Activated B cell treated with CpG ODN at 0.5 μM for 24 hours (primary cell): ENCODE measurements at regions of chr1 and their contacts with region 1.

Region 1: GRCh38 chr1:39268112-39268581 is 63.7 kb downstream of the MACF1 start:
- DNase-seq: no peak
- ATAC-seq: no peak
- H3K4me3 Mint-ChIP-seq: peak overlapping the region; percentile 82
- H3K27ac Mint-ChIP-seq: peak overlapping the region; percentile 84
- H3K4me1 Mint-ChIP-seq: peaks cover 65% of the 10 kb centered on the region
- H3K27me3 Mint-ChIP-seq: no peaks in the 10 kb centered on the region
- CTCF ChIP-seq: no peak

Region 2: GRCh38 chr1:38873027-38873969 is 394.8 kb before region 1 on chr1 and contains the start of gene MYCBP:
- CTCF ChIA-PET with region 1: no interaction called
- POLR2A ChIA-PET with region 1: no interaction called
- intact Hi-C with region 1: loop called (anchors 10 kb)
- DNase-seq: peak; percentile 97
- ATAC-seq: peak; percentile 99
- H3K4me3 Mint-ChIP-seq: peak within 1 kb of the TSS; percentile 92
- H3K27ac Mint-ChIP-seq: peak within 1 kb of the TSS; percentile 83
- H3K4me1 Mint-ChIP-seq: peaks cover 23% of the 10 kb centered on the region
- H3K27me3 Mint-ChIP-seq: no peaks in the 10 kb centered on the region
- CTCF ChIP-seq: no peak
- total RNA-seq, gene MYCBP: 18.6 and 19.2 TPM in 2 replicates

Region 3: DNA sequence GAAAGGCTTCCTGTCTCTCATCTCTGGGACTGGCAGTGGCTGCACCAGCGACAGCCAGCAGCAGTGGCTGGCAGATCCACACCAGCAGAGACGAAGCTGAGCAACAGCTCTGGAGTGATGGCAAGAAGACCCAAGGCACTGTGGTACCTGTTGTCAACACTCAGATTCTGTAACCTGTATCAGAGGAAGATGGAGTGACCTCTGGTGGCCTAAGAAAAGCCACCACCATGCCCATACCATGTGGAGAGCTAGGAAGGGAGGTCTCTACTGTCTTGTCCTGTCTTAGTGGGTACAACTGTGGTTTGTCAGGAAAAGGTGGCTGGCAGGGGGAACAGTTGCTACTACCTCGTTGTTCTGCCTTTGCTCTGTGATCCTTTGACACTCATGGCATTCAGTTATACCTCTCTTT is 304.0 kb before region 1 on chr1:
- CTCF ChIA-PET with region 1: no interaction called
- POLR2A ChIA-PET with region 1: no interaction called
- intact Hi-C with region 1: no loop called
- DNase-seq: no peak
- ATAC-seq: no peak
- H3K4me3 Mint-ChIP-seq: no peak overlapping the region
- H3K27ac Mint-ChIP-seq: no peak overlapping the region
- H3K4me1 Mint-ChIP-seq: no peaks in the 10 kb centered on the region
- H3K27me3 Mint-ChIP-seq: peaks cover 2% of the 10 kb centered on the region
- CTCF ChIP-seq: no peak

Region 4: GRCh38 chr1:39105061-39105840 is 162.9 kb before region 1 on chr1:
- CTCF ChIA-PET with region 1: interaction called, 109 read pairs
- POLR2A ChIA-PET with region 1: interaction called, 13 read pairs
- intact Hi-C with region 1: loop called (anchors 1 kb)
- DNase-seq: peak; percentile 62
- ATAC-seq: peak; percentile 8
- H3K4me3 Mint-ChIP-seq: no peak overlapping the region
- H3K27ac Mint-ChIP-seq: no peak overlapping the region
- H3K4me1 Mint-ChIP-seq: peaks cover 33% of the 10 kb centered on the region
- H3K27me3 Mint-ChIP-seq: no peaks in the 10 kb centered on the region
- CTCF ChIP-seq: no peak

Region 5: GRCh38 chr1:39214998-39215873 is 52.9 kb before region 1 on chr1:
- CTCF ChIA-PET with region 1: no interaction called
- POLR2A ChIA-PET with region 1: interaction called, 10 read pairs
- intact Hi-C with region 1: loop called (anchors 2 kb)
- DNase-seq: peak; percentile 20
- ATAC-seq: peak; percentile 83
- H3K4me3 Mint-ChIP-seq: peak overlapping the region; percentile 84
- H3K27ac Mint-ChIP-seq: peak overlapping the region; percentile 83
- H3K4me1 Mint-ChIP-seq: peaks cover 55% of the 10 kb centered on the region
- H3K27me3 Mint-ChIP-seq: no peaks in the 10 kb centered on the region
- CTCF ChIP-seq: no peak

Region 6: DNA sequence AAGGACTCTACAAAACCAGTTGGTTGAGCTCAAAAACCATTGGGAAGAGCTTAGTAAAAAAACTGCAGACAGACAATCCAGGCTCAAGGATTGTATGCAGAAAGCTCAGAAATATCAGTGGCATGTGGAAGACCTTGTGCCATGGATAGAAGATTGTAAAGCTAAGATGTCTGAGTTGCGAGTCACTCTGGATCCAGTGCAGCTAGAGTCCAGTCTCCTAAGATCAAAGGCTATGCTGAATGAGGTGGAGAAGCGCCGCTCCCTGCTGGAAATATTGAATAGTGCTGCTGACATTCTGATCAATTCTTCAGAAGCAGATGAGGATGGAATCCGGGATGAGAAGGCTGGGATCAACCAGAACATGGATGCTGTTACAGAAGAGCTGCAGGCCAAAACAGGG is 119.3 kb after region 1 on chr1:
- CTCF ChIA-PET with region 1: no interaction called
- POLR2A ChIA-PET with region 1: no interaction called
- intact Hi-C with region 1: no loop called
- DNase-seq: no peak
- ATAC-seq: no peak
- H3K4me3 Mint-ChIP-seq: no peak overlapping the region
- H3K27ac Mint-ChIP-seq: no peak overlapping the region
- H3K4me1 Mint-ChIP-seq: no peaks in the 10 kb centered on the region
- H3K27me3 Mint-ChIP-seq: no peaks in the 10 kb centered on the region
- CTCF ChIP-seq: no peak